ENCODE measurements at regions of chr7 and their contacts with region 1.

Region 1: DNA sequence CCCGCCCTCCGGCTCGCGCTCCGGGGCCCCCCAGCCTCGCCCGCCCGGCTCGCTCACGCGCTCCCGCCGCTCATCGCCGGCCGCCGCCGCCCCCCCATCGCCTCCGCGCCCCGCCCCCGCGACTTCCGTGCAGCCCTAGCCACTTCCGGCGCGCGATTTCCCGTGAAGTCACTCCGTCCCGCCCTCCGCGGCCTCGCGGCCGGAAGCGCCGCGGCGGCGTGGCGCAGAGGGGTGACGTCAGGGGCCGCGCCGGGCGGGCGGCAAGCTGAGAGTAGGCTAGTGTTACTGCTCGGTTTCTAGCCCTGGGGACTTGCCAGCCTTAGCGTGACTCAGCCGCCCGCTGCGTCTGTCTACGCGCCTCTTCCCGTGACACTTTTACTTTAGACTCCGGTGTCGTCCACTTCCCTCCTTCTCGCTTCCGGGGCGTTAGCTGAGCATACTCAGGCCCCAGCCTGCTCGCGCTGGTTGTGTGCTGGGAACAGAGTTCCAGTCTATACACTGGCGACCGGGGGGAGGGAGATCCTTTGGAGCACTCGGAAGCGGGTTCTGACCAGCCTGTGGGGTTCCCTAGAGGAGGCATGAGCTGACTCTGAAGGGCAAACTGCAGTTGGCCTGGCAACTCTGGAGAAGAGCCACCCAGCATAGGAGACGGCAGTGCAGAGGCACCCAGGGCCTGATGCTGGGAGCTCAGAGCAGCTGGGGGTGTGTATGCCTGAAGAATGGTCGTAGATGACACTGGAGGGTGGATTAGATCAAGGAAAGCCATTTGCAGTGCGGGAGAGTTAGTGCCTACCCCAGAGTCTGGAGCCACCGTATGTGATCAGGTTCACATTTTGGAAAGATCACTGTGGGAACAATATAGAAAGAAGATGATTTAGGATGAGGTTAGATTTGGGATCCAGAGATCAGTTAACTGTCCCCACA is at the start of gene PURB:
- DNase-seq: peak; percentile 93 to 96
- ATAC-seq: peak; percentile 97 to 99 (median 98)
- H3K4me3 ChIP-seq: peak within 1 kb of the TSS; percentile 63 to 97 (median 90)
- H3K27ac ChIP-seq: peak within 1 kb of the TSS; percentile 80 to 98 (median 97)
- H3K4me1 ChIP-seq: peaks cover 9 to 53% (median 45%) of the 10 kb centered on the region in 9 donors
- H3K27me3 ChIP-seq: no peaks in the 10 kb centered on the region
- CTCF ChIP-seq: no peak
- total RNA-seq, gene PURB: 12.7 to 18.7 (median 16.7) TPM

Region 2: DNA sequence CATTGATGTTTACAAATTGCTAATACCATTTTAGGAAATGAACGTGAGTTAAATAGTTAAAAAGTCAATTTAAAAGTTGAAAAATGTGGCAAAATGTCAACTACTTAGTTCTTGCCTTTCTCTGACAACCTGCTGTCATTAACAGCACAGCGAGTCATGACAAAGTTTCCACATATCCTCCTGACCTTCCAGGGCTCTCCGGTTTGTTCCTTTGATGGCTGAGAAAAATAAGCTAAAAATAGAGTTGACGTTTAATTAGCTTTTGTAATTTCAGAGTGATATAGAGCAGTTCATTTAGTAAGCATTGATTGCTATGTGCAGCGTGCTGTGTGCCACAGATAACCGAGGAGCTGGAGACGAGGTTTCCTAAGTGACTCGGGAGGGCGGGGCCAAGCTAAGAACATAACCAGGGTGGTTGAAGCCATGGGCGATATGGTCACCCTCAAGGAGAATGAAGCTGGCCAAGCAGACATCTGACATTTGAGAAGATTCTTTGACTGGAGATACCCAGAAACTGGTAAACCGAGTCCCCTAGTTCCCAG is 231.3 kb before region 1 on chr7:
- intact Hi-C with region 1: no loop called
- DNase-seq: peak in 1 of 2 donors; percentile 54
- ATAC-seq: peak; percentile 53 to 83 (median 74)
- H3K4me3 ChIP-seq: no peak overlapping the region
- H3K27ac ChIP-seq: peak overlapping the region; percentile 14 to 85 (median 78)
- H3K4me1 ChIP-seq: peaks cover 0 to 30% (median 10%) of the 10 kb centered on the region in 9 donors
- H3K27me3 ChIP-seq: no peaks in the 10 kb centered on the region
- CTCF ChIP-seq: no peak

Region 3: GRCh38 chr7:44858161-44858560 is 27.5 kb before region 1 on chr7:
- intact Hi-C with region 1: loop called in 1 of 10 experiments (anchors 5 kb)
- DNase-seq: no peak
- ATAC-seq: no peak
- H3K4me3 ChIP-seq: no peak overlapping the region
- H3K27ac ChIP-seq: no peak overlapping the region
- H3K4me1 ChIP-seq: peaks cover 0 to 7% (median 0%) of the 10 kb centered on the region in 9 donors
- H3K27me3 ChIP-seq: peaks cover 0 to 9% (median 0%) of the 10 kb centered on the region in 7 donors
- CTCF ChIP-seq: peak in 1 of 9 donors; percentile 14

Region 4: GRCh38 chr7:44936322-44936721 is 50.7 kb after region 1 on chr7:
- intact Hi-C with region 1: no loop called
- DNase-seq: no peak
- ATAC-seq: no peak
- H3K4me3 ChIP-seq: no peak overlapping the region
- H3K27ac ChIP-seq: no peak overlapping the region
- H3K4me1 ChIP-seq: no peaks in the 10 kb centered on the region
- H3K27me3 ChIP-seq: peaks cover 0 to 4% (median 0%) of the 10 kb centered on the region in 7 donors
- CTCF ChIP-seq: no peak

Region 5: GRCh38 chr7:44986218-44987053 is 100.8 kb after region 1 on chr7:
- intact Hi-C with region 1: loop called in 1 of 10 experiments (anchors 10 kb)
- DNase-seq: peak; percentile 93 to 96
- ATAC-seq: peak; percentile 98 to 99 (median 99)
- H3K4me3 ChIP-seq: peak overlapping the region; percentile 6 to 71 (median 62)
- H3K27ac ChIP-seq: peak overlapping the region; percentile 89 to 98 (median 96)
- H3K4me1 ChIP-seq: peaks cover 0 to 56% (median 30%) of the 10 kb centered on the region in 9 donors
- H3K27me3 ChIP-seq: no peaks in the 10 kb centered on the region
- CTCF ChIP-seq: no peak